ENCODE measurements at regions of chr2 and their contacts with region 1.

Region 1: DNA sequence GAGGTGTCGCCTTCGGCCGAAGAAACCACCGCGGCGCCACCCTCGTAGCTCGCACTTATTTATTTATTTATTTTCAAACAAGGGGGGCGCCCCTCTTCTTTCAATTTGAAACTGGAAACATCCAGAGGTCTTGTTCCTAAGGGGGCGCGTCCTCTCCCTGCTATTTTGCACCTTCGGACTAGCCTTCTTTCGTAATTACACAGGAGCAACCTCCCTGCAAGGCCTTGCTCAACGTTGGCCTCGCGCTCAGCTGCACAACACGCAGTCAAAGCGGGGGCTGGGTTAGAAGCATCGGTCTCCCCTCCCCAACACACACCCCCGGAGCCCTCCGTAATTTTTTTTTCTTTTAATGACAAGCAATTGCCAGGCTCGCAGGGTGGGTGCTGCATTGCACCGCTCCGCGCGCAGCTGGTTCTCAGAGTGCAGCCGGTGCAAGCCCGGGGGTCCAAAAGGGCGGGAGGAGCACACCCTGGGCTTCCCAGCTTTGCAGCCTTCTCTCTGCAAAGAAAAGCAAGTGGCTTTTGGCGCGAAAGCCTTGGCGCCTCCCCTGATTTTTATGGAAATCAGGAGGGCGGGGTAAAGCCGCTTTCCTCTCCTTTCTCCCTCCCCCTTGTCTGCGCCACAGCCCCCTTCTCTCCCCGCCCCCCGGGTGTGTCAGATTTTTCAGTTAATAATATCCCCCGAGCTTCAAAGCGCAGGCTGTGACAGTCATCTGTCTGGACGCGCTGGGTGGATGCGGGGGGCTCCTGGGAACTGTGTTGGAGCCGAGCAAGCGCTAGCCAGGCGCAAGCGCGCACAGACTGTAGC is at the start of gene MYCN:
- DNase-seq: peak; percentile 89
- H3K4me3 ChIP-seq: peak within 1 kb of the TSS; percentile 53 to 65
- H3K27ac ChIP-seq: peak within 1 kb of the TSS in 1 of 2 experiments; percentile 77; a peak in 2 of 4 replicates
- H3K4me1 ChIP-seq: peaks cover 0 to 31% of the 10 kb centered on the region in 2 experiments; a peak in 2 of 4 replicates
- H3K27me3 ChIP-seq: peaks cover 41% of the 10 kb centered on the region
- CTCF ChIP-seq: peak; percentile 28
- EP300 ChIP-seq: 0 out of 4 replicates have a peak, but pooled peaks of 1 of the 2 experiments have one; percentile 27
- RAD21 ChIP-seq: peak; percentile 90
- polyA plus RNA-seq, gene MYCN: 0.03 TPM in 1 of 2 replicates, not detected in the other

Region 2: GRCh38 chr2:15799432-15799827 is 140.6 kb before region 1 on chr2:
- CTCF ChIA-PET with region 1: interaction called, 39 read pairs
- POLR2A ChIA-PET with region 1: interaction called, 10 read pairs
- DNase-seq: no peak
- H3K4me3 ChIP-seq: no peak overlapping the region
- H3K27ac ChIP-seq: no peak overlapping the region; a peak in 1 of 4 replicates
- H3K4me1 ChIP-seq: peaks cover 0 to 61% of the 10 kb centered on the region in 2 experiments; a peak in 2 of 4 replicates
- H3K27me3 ChIP-seq: no peaks in the 10 kb centered on the region
- CTCF ChIP-seq: no peak
- EP300 ChIP-seq: no peak
- RAD21 ChIP-seq: no peak

Region 3: GRCh38 chr2:15927581-15928218 is 12.4 kb before region 1 on chr2:
- CTCF ChIA-PET with region 1: interaction called, 42 read pairs
- POLR2A ChIA-PET with region 1: no interaction called
- DNase-seq: no peak
- H3K4me3 ChIP-seq: no peak overlapping the region
- H3K27ac ChIP-seq: no peak overlapping the region
- H3K4me1 ChIP-seq: no peaks in the 10 kb centered on the region
- H3K27me3 ChIP-seq: no peaks in the 10 kb centered on the region
- CTCF ChIP-seq: no peak
- EP300 ChIP-seq: no peak
- RAD21 ChIP-seq: no peak

Region 4: DNA sequence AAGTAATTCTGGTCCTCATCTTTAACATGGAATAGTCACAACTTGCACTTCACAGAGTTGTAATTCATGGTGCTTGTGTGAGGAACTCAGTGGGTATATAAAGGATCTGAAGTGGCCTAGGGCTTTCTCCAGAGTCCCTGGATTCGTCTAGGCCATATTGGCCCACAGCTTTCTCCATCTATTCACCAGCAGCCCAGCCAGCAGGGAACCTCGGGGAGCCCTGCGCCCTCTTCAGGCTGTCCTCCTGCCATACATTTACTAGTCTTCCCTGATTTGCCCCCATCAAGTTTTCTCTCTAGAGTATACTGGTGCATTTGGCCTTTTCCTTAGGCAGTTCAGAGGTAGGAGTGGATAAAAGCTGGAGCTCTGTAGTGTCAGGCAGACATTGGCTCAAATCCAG is 278.6 kb after region 1 on chr2:
- CTCF ChIA-PET with region 1: interaction called, 20 read pairs
- POLR2A ChIA-PET with region 1: interaction called, 3 read pairs
- DNase-seq: peak; percentile 72
- H3K4me3 ChIP-seq: no peak overlapping the region; a peak in 1 of 4 replicates
- H3K27ac ChIP-seq: no peak overlapping the region
- H3K4me1 ChIP-seq: peaks cover 0 to 12% of the 10 kb centered on the region in 2 experiments; a peak in 1 of 4 replicates
- H3K27me3 ChIP-seq: no peaks in the 10 kb centered on the region
- CTCF ChIP-seq: no peak
- EP300 ChIP-seq: no peak
- RAD21 ChIP-seq: peak; percentile 67

Region 5: DNA sequence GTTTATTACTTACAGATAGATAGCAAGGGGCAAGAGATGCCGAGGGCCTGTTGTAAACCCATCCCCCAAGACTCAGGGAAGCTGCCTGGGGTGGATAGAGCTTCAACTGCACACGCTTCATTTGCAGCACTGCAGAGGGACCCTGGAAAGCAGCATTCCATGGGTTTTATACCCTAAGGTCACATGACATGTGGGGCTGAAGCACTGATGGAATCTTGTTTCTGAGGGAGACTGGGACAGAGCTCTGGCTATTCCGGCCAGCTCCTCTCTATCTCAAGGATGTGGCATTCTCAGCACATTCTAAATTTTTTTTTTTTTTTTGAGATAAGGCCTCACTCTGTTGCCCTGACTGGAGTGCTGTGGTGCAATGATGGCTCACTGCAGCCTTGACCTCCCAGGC is 300.3 kb after region 1 on chr2:
- CTCF ChIA-PET with region 1: no interaction called
- POLR2A ChIA-PET with region 1: no interaction called
- DNase-seq: no peak
- H3K4me3 ChIP-seq: no peak overlapping the region
- H3K27ac ChIP-seq: no peak overlapping the region
- H3K4me1 ChIP-seq: no peaks in the 10 kb centered on the region
- H3K27me3 ChIP-seq: no peaks in the 10 kb centered on the region
- CTCF ChIP-seq: no peak
- EP300 ChIP-seq: no peak
- RAD21 ChIP-seq: no peak

Region 6: GRCh38 chr2:16321872-16322271 is 381.8 kb after region 1 on chr2:
- CTCF ChIA-PET with region 1: interaction called, 83 read pairs
- POLR2A ChIA-PET with region 1: interaction called, 6 read pairs
- DNase-seq: peak; percentile 69
- H3K4me3 ChIP-seq: no peak overlapping the region
- H3K27ac ChIP-seq: no peak overlapping the region
- H3K4me1 ChIP-seq: peaks cover 0 to 61% of the 10 kb centered on the region in 2 experiments; a peak in 2 of 4 replicates
- H3K27me3 ChIP-seq: no peaks in the 10 kb centered on the region
- CTCF ChIP-seq: no peak
- EP300 ChIP-seq: no peak
- RAD21 ChIP-seq: peak; percentile 74

Region 7: DNA sequence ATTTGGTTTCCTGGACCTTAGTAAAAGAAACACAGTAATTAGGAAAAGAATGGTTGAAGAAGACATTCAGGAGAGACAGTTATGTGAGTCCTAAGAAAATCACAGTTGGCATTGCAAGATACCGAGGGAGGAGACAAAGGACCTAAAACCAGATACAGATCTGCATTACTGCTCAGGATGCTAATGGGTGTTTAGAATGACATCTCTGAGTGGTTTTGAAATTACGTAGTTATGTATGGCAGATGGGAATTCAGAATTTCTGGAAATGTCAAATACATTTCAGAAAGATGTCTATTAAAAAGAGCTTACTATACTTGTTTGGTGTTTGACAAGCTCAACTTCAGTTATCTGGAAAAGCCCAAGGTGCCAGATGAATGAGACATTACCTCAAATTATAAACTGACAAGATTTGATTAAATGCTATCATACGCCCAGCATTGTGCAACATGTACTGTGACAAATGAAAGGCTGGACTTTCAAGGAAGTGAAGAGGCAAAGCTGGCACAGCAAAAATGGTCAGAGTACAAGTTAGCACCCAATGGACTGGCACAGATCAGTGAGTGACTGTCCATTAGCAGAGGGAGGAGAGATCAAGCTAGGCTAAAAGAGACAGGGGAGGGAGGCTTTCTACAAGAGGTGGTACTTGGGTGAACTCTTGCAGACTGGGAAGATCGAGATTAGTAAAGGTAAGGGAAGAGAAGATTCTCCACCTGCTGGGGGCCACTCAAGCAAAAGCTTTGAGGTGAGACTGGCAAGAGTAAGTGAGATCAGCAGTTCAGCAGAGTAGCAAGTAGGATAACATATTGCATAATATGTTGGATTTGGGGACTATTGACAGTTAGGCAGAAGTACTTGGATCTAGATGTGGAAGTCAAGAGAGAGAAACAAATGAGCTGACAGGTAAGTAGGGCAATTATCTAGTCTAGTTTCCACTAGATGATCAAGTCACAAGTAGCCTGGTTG is 556.6 kb after region 1 on chr2:
- CTCF ChIA-PET with region 1: interaction called, 236 read pairs
- POLR2A ChIA-PET with region 1: no interaction called
- DNase-seq: no peak
- H3K4me3 ChIP-seq: no peak overlapping the region
- H3K27ac ChIP-seq: no peak overlapping the region
- H3K4me1 ChIP-seq: no peaks in the 10 kb centered on the region
- H3K27me3 ChIP-seq: no peaks in the 10 kb centered on the region
- CTCF ChIP-seq: no peak
- EP300 ChIP-seq: no peak
- RAD21 ChIP-seq: no peak

Region 8: GRCh38 chr2:16756831-16757644 is 817.0 kb after region 1 on chr2:
- CTCF ChIA-PET with region 1: interaction called, 31 read pairs
- POLR2A ChIA-PET with region 1: no interaction called
- DNase-seq: peak; percentile 79
- H3K4me3 ChIP-seq: peak overlapping the region in 1 of 2 experiments; percentile 27; a peak in 1 of 4 replicates
- H3K27ac ChIP-seq: no peak overlapping the region
- H3K4me1 ChIP-seq: peaks cover 0 to 4% of the 10 kb centered on the region in 2 experiments; a peak in 1 of 4 replicates
- H3K27me3 ChIP-seq: no peaks in the 10 kb centered on the region
- CTCF ChIP-seq: peak; percentile 95
- EP300 ChIP-seq: no peak
- RAD21 ChIP-seq: peak; percentile 99